Activated B cell treated with CpG ODN at 0.5 μM for 24 hours (primary cell): ENCODE measurements at regions of chr7 and their contacts with region 1.

Region 1: GRCh38 chr7:95476904-95477594 is 8.7 kb upstream of the ASB4 start:
- DNase-seq: no peak
- ATAC-seq: peak; percentile 77
- H3K4me3 Mint-ChIP-seq: no peak overlapping the region
- H3K27ac Mint-ChIP-seq: no peak overlapping the region
- H3K4me1 Mint-ChIP-seq: no peaks in the 10 kb centered on the region
- H3K27me3 Mint-ChIP-seq: peaks cover 4% of the 10 kb centered on the region
- CTCF ChIP-seq: peak; percentile 96

Region 2: GRCh38 chr7:94442639-94443038 is 1034.4 kb before region 1 on chr7:
- CTCF ChIA-PET with region 1: interaction called, 110 read pairs
- POLR2A ChIA-PET with region 1: no interaction called
- intact Hi-C with region 1: no loop called
- DNase-seq: no peak
- ATAC-seq: no peak
- H3K4me3 Mint-ChIP-seq: no peak overlapping the region
- H3K27ac Mint-ChIP-seq: no peak overlapping the region
- H3K4me1 Mint-ChIP-seq: no peaks in the 10 kb centered on the region
- H3K27me3 Mint-ChIP-seq: peaks cover 7% of the 10 kb centered on the region
- CTCF ChIP-seq: no peak

Region 3: GRCh38 chr7:95190515-95190914 is 286.5 kb before region 1 on chr7:
- CTCF ChIA-PET with region 1: interaction called, 3 read pairs
- POLR2A ChIA-PET with region 1: no interaction called
- intact Hi-C with region 1: loop called (anchors 2 kb)
- DNase-seq: no peak
- ATAC-seq: no peak
- H3K4me3 Mint-ChIP-seq: no peak overlapping the region
- H3K27ac Mint-ChIP-seq: no peak overlapping the region
- H3K4me1 Mint-ChIP-seq: no peaks in the 10 kb centered on the region
- H3K27me3 Mint-ChIP-seq: no peaks in the 10 kb centered on the region
- CTCF ChIP-seq: no peak

Region 4: DNA sequence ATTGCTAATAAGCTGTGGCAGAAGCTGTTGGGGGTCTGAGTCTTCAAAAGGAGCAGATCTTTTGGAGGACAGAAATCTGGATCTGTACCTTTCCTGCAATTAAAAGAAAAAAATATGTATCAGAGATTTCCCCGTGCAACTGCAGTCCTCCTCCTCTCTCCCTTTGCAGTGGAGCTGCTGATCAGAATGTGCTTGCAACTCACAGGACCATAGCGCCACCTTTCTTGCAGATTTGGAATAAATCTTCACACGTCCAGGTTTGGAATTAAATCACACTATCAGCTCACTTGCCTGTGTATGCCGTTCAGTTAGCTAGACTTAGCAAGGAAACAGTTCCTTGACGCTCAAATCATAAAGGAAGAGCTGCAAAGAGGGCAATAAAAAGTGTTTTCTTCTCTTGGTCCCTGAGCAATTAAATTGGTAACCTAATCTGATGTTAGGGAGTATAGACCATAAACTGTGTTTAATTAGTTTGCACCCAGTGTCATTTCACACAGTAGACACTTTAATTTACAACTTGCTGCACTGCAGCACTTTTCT is 230.1 kb before region 1 on chr7:
- CTCF ChIA-PET with region 1: interaction called, 4 read pairs
- POLR2A ChIA-PET with region 1: no interaction called
- intact Hi-C with region 1: loop called (anchors 5 kb)
- DNase-seq: no peak
- ATAC-seq: no peak
- H3K4me3 Mint-ChIP-seq: no peak overlapping the region
- H3K27ac Mint-ChIP-seq: no peak overlapping the region
- H3K4me1 Mint-ChIP-seq: no peaks in the 10 kb centered on the region
- H3K27me3 Mint-ChIP-seq: no peaks in the 10 kb centered on the region
- CTCF ChIP-seq: no peak

Region 5: DNA sequence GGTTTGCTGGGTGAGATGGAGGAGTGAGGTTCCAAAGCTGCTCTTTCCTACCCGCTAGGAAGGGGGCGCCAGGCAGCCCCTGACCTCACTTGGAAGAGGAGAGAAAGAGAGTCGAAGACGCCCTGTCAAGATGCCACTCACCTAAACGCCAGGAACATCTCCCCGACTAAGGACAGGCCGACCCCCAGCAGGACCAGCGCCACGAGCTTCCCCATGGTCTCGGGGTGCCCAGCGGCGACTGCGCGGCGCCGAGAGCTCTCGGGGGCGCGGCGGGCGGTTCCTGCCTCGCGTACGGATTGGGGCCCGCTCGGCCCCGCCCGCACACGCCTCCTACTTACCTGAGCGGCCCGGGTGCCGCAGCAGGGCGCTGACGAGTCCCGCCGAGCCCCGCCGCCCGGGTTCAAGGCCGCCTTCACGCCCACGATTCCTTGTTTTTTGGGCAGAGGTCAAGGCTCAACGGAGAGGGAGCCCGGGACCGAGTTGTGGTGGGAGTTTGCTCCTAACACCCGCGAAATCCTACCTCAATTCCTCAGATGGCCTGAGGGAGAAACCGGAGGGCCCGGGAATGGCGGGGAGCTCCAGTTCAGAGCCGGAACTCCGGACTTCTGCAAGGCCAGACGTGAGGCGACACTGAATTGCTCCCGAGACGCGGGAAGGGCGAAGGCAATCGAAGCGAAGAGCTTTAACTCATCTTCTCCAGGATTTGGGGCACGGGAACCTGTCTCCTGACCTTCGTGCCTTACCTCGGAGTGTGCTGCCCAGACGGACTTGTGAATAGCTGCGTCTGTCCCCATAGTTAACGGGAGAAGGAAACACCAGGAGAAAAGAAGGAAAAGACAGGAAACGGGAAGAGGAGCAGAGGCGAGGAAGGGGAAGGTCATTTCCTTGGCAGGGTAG is 80.7 kb before region 1 on chr7 and contains the start of gene PON3:
- CTCF ChIA-PET with region 1: interaction called, 16 read pairs
- POLR2A ChIA-PET with region 1: no interaction called
- intact Hi-C with region 1: loop called (anchors 1 kb)
- DNase-seq: peak; percentile 16
- ATAC-seq: peak; percentile 52
- H3K4me3 Mint-ChIP-seq: peak within 1 kb of the TSS; percentile 56
- H3K27ac Mint-ChIP-seq: no peak within 1 kb of the TSS
- H3K4me1 Mint-ChIP-seq: peaks cover 9% of the 10 kb centered on the region
- H3K27me3 Mint-ChIP-seq: peaks cover 40% of the 10 kb centered on the region
- CTCF ChIP-seq: no peak
- total RNA-seq, gene PON3: not detected in 2 replicates

Region 6: GRCh38 chr7:95491634-95492320 is 14.7 kb after region 1 on chr7:
- CTCF ChIA-PET with region 1: interaction called, 18 read pairs
- POLR2A ChIA-PET with region 1: no interaction called
- intact Hi-C with region 1: no loop called
- DNase-seq: no peak
- ATAC-seq: no peak
- H3K4me3 Mint-ChIP-seq: no peak overlapping the region
- H3K27ac Mint-ChIP-seq: no peak overlapping the region
- H3K4me1 Mint-ChIP-seq: no peaks in the 10 kb centered on the region
- H3K27me3 Mint-ChIP-seq: no peaks in the 10 kb centered on the region
- CTCF ChIP-seq: no peak